Activated CD8-positive, alpha-beta T cell treated with anti-CD3 and anti-CD28 coated beads, Interleukin-2, amount 10 ng/mL, durations not matched to agents 7 days and 5 days (primary cell): ENCODE measurements at regions of chr9 and their contacts with region 1.

Region 1: GRCh38 chr9:99140685-99141314 is 35.9 kb downstream of the TGFBR1 start:
- DNase-seq: peak; percentile 56
- ATAC-seq: peak; percentile 65
- H3K4me3 Mint-ChIP-seq: no peak overlapping the region
- H3K27ac Mint-ChIP-seq: peak overlapping the region; percentile 66
- H3K4me1 Mint-ChIP-seq: peaks cover 50% of the 10 kb centered on the region
- H3K27me3 Mint-ChIP-seq: no peaks in the 10 kb centered on the region

Region 2: DNA sequence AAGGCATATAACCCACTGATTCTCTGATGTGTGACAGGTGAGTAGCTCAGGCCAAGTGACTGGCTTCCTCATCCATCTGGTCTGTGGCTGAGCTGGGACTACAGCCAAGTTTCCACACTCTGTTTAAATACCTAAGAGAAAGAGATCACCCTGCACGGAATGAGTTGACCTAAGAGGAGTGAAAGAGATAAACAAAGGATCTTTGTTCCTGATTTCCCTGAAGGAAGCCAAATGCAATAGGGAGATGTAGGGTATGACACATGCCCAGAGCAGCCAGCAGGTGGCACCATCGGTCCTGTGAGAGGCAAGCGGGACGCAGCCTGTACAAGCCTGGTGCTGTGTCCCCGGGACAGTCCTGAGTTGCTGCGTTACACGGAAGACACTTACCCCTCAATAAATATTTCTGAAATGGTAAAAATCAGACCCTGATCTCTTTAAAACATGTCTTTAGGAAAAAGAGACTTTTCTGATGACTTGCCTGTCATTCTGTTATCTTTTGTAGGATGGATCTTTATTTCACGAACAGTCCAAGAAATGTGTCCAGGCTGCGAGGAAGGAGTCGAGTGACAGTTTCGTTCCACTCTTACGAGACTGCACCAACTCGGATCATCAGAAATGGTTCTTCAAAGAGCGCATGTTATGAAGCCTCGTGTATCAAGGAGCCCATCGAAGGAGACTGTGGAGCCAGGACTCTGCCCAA is 292.2 kb before region 1 on chr9:
- CTCF ChIA-PET with region 1: interaction called, 48 read pairs
- POLR2A ChIA-PET with region 1: interaction called, 5 read pairs
- DNase-seq: peak; percentile 86
- ATAC-seq: peak; percentile 95
- H3K4me3 Mint-ChIP-seq: no peak overlapping the region
- H3K27ac Mint-ChIP-seq: no peak overlapping the region
- H3K4me1 Mint-ChIP-seq: peaks cover 9% of the 10 kb centered on the region
- H3K27me3 Mint-ChIP-seq: no peaks in the 10 kb centered on the region

Region 3: DNA sequence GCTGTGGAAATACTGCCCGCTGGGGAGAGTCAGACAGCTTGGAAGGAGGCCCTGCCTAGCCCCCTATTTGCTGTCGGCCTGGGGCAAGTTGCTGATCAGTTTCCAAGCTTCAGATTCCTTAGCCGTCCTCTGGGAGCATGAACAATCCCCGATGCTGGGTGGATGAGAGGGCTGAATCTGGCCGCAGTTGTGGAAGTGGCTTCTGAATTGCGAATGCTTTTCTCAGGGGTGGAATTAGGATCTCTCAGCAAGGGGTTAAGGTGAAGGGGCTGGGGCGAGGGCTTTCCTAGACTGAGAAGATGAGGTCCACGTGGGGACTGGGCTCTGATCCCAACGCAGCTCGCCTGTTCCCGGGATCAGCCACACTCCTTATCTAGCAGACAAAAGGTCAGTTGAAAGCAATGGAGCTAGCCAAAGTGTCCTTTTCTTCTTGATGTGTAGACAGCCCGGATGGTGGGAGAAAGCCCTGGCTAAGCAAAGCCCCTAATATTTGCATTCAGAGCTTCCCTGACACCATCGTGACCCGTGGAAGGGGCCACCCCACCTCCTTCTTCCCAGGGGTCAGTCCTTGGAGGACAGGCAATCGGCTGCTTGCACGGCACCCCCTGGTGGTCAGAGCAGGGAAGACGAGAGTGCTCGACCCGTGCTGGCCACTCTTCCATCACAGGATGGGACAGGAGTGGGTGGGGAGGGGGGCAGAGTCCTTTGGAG is 142.2 kb before region 1 on chr9:
- CTCF ChIA-PET with region 1: interaction called, 246 read pairs
- POLR2A ChIA-PET with region 1: interaction called, 4 read pairs
- DNase-seq: peak; percentile 68
- ATAC-seq: peak; percentile 73
- H3K4me3 Mint-ChIP-seq: no peak overlapping the region
- H3K27ac Mint-ChIP-seq: no peak overlapping the region
- H3K4me1 Mint-ChIP-seq: peaks cover 35% of the 10 kb centered on the region
- H3K27me3 Mint-ChIP-seq: peaks cover 25% of the 10 kb centered on the region

Region 4: DNA sequence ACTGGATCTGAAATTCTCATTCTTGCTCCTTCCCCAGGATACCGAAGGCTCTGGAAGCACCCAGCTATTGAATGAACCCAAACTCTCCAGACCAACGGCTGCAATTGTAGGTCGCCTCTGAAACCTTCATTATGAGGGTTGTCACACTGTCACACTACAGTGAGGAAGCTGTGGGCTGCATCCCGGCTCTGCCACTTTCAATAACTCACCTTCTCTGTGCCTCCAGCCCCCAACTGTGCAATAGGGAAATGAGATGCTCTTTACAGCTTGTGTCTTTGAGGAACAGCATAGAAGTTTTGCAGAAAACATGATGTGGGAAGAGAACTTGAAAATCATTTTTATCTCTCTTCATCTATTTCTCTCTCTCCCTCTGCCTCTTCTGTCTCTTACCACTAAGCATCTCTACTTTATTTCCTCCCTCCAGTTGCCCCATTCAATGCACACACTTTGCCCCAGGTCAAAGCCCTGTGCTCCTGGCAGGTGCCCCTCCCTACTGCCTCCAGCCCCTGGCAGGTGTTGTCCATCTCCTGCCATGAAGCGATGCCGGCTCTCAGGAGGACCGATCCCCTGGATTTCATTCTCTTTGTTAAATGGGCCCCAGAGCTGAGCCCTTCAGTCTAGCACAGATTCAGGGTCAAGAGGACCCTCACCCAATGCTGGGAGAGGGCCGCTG is 105.4 kb before region 1 on chr9:
- CTCF ChIA-PET with region 1: interaction called, 11 read pairs
- POLR2A ChIA-PET with region 1: interaction called, 3 read pairs
- DNase-seq: no peak
- ATAC-seq: no peak
- H3K4me3 Mint-ChIP-seq: no peak overlapping the region
- H3K27ac Mint-ChIP-seq: peak overlapping the region; percentile 45
- H3K4me1 Mint-ChIP-seq: peaks cover 59% of the 10 kb centered on the region
- H3K27me3 Mint-ChIP-seq: peaks cover 4% of the 10 kb centered on the region

Region 5: GRCh38 chr9:99112750-99113413 is 27.9 kb before region 1 on chr9:
- CTCF ChIA-PET with region 1: interaction called, 125 read pairs
- POLR2A ChIA-PET with region 1: interaction called, 4 read pairs
- DNase-seq: peak; percentile 78
- ATAC-seq: peak; percentile 98
- H3K4me3 Mint-ChIP-seq: peak overlapping the region; percentile 61
- H3K27ac Mint-ChIP-seq: peak overlapping the region; percentile 86
- H3K4me1 Mint-ChIP-seq: peaks cover 91% of the 10 kb centered on the region
- H3K27me3 Mint-ChIP-seq: no peaks in the 10 kb centered on the region